ENCODE measurements at regions of chr19 and their contacts with region 1.

Region 1: DNA sequence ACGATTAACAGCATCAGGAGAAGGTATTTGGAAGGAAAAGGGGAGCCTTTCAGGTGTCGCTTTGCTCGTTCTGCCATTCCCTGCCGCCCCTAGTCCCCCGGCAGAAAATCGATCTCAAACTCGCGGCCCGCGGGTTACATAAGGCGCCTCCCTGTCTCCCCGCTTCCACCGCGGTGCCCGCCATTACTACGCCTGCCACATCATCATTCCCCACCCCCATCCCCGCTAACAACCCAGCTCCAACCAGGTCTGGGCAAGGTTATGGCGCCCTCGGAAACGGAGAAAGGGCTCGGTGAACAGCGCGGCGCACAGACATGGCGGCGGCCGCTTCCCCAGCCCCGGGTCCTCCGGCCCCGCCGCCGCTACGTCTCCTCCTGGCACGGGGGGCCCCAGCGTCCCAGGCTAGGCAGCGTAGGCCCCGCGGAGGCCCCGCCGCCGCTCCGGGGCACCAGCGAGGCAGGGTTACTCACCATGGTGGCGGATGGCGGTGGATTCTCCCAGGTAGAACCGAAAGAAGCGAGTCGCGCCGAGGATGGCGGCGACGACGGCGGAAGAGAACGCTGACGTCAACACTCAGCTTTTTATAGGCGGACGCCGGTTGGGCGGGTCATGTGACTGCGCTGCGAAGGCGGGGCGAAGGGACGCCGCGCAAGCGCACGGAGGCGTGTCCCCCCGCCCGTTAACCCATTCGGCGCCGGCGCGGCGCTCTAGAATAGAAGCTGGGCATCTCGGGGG is at the start of gene EEF2:
- DNase-seq: peak; percentile 91
- ATAC-seq: peak; percentile 56 to 85 (median 78)
- H3K4me3 ChIP-seq: peak within 1 kb of the TSS; percentile 85 to 100 (median 94)
- H3K27ac ChIP-seq: peak within 1 kb of the TSS; percentile 88 to 100 (median 96)
- H3K4me1 ChIP-seq: peaks cover 6 to 62% (median 45%) of the 10 kb centered on the region in 9 donors
- H3K27me3 ChIP-seq: no peaks in the 10 kb centered on the region
- CTCF ChIP-seq: no peak
- total RNA-seq, gene EEF2: 1,845 to 2,887 (median 2,645) TPM

Region 2: GRCh38 chr19:3762501-3763459 is 222.3 kb before region 1 on chr19 and contains the start of gene MRPL54:
- intact Hi-C with region 1: loop called in 2 of 10 experiments (anchors 2 to 5 kb)
- DNase-seq: peak; percentile 99 to 100
- ATAC-seq: peak; percentile 94 to 98 (median 96)
- H3K4me3 ChIP-seq: peak within 1 kb of the TSS; percentile 68 to 99 (median 91)
- H3K27ac ChIP-seq: peak within 1 kb of the TSS; percentile 95 to 100 (median 97)
- H3K4me1 ChIP-seq: peaks cover 3 to 48% (median 35%) of the 10 kb centered on the region in 9 donors
- H3K27me3 ChIP-seq: no peaks in the 10 kb centered on the region
- CTCF ChIP-seq: no peak
- total RNA-seq, gene MRPL54: 61.4 to 93.4 (median 67.0) TPM

Region 3: GRCh38 chr19:4065430-4066175 is 80.5 kb after region 1 on chr19:
- intact Hi-C with region 1: loop called in 1 of 10 experiments (anchors 5 kb)
- DNase-seq: peak; percentile 95 to 97
- ATAC-seq: peak; percentile 78 to 88 (median 84)
- H3K4me3 ChIP-seq: peak overlapping the region in 9 of 10 donors; percentile 79 to 99 (median 96)
- H3K27ac ChIP-seq: peak overlapping the region; percentile 98 to 100 (median 99)
- H3K4me1 ChIP-seq: peaks cover 33 to 62% (median 53%) of the 10 kb centered on the region in 9 donors
- H3K27me3 ChIP-seq: no peaks in the 10 kb centered on the region
- CTCF ChIP-seq: peak in 1 of 9 donors; percentile 20

Region 4: GRCh38 chr19:4139614-4140236 is 154.7 kb after region 1 on chr19:
- intact Hi-C with region 1: loop called in 2 of 10 experiments (anchors 2 to 5 kb)
- DNase-seq: peak; percentile 75 to 87
- ATAC-seq: peak in 7 of 8 donors; percentile 70 to 84 (median 77)
- H3K4me3 ChIP-seq: no peak overlapping the region
- H3K27ac ChIP-seq: no peak overlapping the region
- H3K4me1 ChIP-seq: peaks cover 0 to 8% (median 0%) of the 10 kb centered on the region in 9 donors
- H3K27me3 ChIP-seq: no peaks in the 10 kb centered on the region
- CTCF ChIP-seq: peak; percentile 58 to 85 (median 69)

Region 5: GRCh38 chr19:4199699-4200293 is 214.7 kb after region 1 on chr19:
- intact Hi-C with region 1: loop called in 9 of 10 experiments (anchors 1 to 10 kb)
- DNase-seq: no peak
- ATAC-seq: no peak
- H3K4me3 ChIP-seq: no peak overlapping the region
- H3K27ac ChIP-seq: no peak overlapping the region
- H3K4me1 ChIP-seq: peaks cover 0 to 10% (median 6%) of the 10 kb centered on the region in 9 donors
- H3K27me3 ChIP-seq: peaks cover 22 to 53% (median 48%) of the 10 kb centered on the region in 7 donors
- CTCF ChIP-seq: no peak